Right cardiac atrium (tissue), 5 donors: ENCODE measurements at regions of chr3 and their contacts with region 1.

Region 1: GRCh38 chr3:64039981-64040733 is 16.9 kb upstream of the PSMD6 start:
- DNase-seq: peak in 1 of 3 donors; percentile 28
- ATAC-seq: peak in 1 of 2 donors; percentile 43
- H3K4me3 ChIP-seq: no peak overlapping the region
- H3K27ac ChIP-seq: no peak overlapping the region
- H3K4me1 ChIP-seq: no peaks in the 10 kb centered on the region
- H3K27me3 ChIP-seq: no peaks in the 10 kb centered on the region

Region 2: GRCh38 chr3:64399205-64399800 is 359.1 kb after region 1 on chr3:
- intact Hi-C with region 1: loop called in 1 of 4 experiments (anchors 5 kb)
- DNase-seq: no peak
- ATAC-seq: peak; percentile 61 to 75
- H3K4me3 ChIP-seq: no peak overlapping the region
- H3K27ac ChIP-seq: no peak overlapping the region
- H3K4me1 ChIP-seq: no peaks in the 10 kb centered on the region
- H3K27me3 ChIP-seq: no peaks in the 10 kb centered on the region

Region 3: GRCh38 chr3:64484289-64484992 is 444.3 kb after region 1 on chr3:
- intact Hi-C with region 1: loop called in 1 of 4 experiments (anchors 2 kb)
- DNase-seq: peak; percentile 82 to 90 (median 89)
- ATAC-seq: peak; percentile 93 to 95
- H3K4me3 ChIP-seq: no peak overlapping the region
- H3K27ac ChIP-seq: no peak overlapping the region
- H3K4me1 ChIP-seq: no peaks in the 10 kb centered on the region
- H3K27me3 ChIP-seq: no peaks in the 10 kb centered on the region